Psoas muscle (tissue), 8 donors: ENCODE measurements at regions of chr11 and their contacts with region 1.

Region 1: DNA sequence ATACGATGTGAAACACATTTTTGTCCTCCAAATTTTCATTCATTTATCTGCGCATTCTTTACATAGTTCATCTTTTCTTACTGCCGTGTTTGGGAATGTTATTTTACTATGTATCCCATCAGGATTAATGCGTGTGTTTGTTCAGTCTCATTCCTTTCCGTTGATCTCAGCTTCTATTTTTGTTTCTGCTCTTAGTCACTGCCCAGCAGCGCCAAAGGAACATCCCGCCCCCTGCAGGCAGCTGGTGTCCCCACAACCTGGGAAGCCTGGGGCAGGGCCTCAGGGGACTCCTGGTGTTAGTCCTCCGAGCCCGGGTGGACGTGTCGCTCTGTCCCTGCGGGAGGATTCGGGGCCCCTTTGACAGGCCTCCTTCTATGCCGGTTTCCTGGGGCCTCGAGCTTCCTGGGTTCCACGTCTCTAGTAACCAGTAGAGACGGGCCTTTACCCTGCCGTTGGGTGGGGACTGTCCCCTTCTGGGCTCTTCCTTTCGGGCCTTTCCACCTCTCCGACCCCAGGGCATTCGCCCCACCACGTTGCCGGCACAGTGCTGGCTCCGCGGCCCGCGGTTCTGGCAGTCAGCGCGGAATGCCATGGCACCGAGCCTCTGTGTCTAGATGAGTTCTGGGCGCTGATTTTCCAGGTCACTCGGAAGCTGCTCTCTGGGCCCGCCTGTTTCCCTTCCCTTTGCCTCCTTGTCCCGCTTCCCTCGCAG is 39.8 kb downstream of the WEE1 start:
- DNase-seq: peak; percentile 93 to 97
- ATAC-seq: peak; percentile 93 to 96 (median 96)
- H3K4me3 ChIP-seq: peak overlapping the region; percentile 62
- H3K27ac ChIP-seq: peak overlapping the region; percentile 94
- H3K4me1 ChIP-seq: peaks cover 5% of the 10 kb centered on the region
- H3K27me3 ChIP-seq: no peaks in the 10 kb centered on the region
- CTCF ChIP-seq: peak; percentile 87

Region 2: DNA sequence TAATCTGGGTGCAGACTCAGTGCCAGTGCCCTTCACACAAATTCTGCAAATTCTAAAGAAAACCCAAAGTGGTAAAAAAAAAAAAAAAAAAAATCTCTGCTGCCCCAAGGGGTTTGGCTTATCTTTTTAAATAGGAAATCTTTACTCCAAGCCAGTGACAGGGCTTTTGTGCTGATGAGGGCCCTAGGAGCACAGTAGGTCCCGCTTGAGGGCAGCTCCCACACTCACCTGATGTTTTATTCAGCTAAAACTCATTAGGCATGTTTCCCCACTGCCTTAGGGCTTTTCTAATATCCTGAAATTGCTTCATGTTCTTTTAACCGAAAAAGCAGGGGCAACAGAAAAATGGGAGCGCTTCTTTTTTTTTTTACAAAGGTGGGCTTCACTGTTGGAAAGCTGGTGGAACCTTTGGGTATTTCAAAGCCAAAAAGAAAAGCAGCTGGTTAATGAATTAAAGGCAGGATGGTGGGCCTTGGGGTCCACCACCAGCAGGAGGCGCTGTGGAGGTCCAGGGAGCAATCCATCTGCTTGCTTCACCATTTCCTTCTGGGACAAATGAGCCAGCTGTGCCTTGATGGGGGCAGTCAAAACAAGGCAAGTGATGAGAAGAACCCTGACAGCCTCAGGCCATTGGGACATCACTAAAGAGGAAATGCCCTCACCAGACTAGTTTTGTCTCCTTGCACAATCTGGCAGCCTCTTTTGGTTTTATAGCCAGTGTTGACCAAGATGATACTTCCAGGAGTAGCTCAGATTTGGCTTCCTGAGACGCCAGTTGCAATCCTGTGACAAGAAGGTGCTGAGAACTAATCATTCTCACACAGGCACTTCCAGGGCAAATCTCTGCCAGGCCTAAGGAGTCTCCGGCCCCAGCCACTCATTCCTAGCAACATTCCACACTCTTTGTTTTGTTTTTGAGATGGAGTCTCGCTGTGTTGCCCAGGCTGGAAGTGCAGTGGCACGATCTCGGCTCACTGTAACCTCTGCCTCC is 78.2 kb before region 1 on chr11:
- intact Hi-C with region 1: loop called in 1 of 2 experiments (anchors 10 kb)
- DNase-seq: peak; percentile 83 to 89
- ATAC-seq: peak; percentile 77 to 90 (median 88)
- H3K4me3 ChIP-seq: no peak overlapping the region
- H3K27ac ChIP-seq: peak overlapping the region; percentile 23
- H3K4me1 ChIP-seq: no peaks in the 10 kb centered on the region
- H3K27me3 ChIP-seq: no peaks in the 10 kb centered on the region
- CTCF ChIP-seq: peak; percentile 70

Region 3: GRCh38 chr11:9573052-9573774 is 40.1 kb before region 1 on chr11 and contains the start of gene WEE1:
- intact Hi-C with region 1: loop called (anchors 2 to 5 kb)
- DNase-seq: peak; percentile 98
- ATAC-seq: peak; percentile 92 to 94 (median 93)
- H3K4me3 ChIP-seq: peak within 1 kb of the TSS; percentile 78
- H3K27ac ChIP-seq: peak within 1 kb of the TSS; percentile 94
- H3K4me1 ChIP-seq: peaks cover 6% of the 10 kb centered on the region
- H3K27me3 ChIP-seq: peaks cover 0 to 4% (median 0%) of the 10 kb centered on the region in 3 donors
- CTCF ChIP-seq: no peak
- total RNA-seq, gene WEE1: 4.8 to 58.6 (median 20.4) TPM

Region 4: GRCh38 chr11:9663699-9664275 is 50.5 kb after region 1 on chr11 and contains the start of gene SWAP70:
- intact Hi-C with region 1: loop called in 1 of 2 experiments (anchors 5 kb)
- DNase-seq: peak; percentile 90 to 93
- ATAC-seq: peak; percentile 95 to 97 (median 96)
- H3K4me3 ChIP-seq: peak within 1 kb of the TSS; percentile 83
- H3K27ac ChIP-seq: peak within 1 kb of the TSS; percentile 81
- H3K4me1 ChIP-seq: no peaks in the 10 kb centered on the region
- H3K27me3 ChIP-seq: peaks cover 0 to 18% (median 6%) of the 10 kb centered on the region in 3 donors
- CTCF ChIP-seq: peak; percentile 40
- total RNA-seq, gene SWAP70: 8.2 to 13.3 (median 11.0) TPM